Activated B cell treated with CpG ODN at 0.5 μM for 24 hours (primary cell): ENCODE measurements at regions of chr6 and their contacts with region 1.

Region 1: DNA sequence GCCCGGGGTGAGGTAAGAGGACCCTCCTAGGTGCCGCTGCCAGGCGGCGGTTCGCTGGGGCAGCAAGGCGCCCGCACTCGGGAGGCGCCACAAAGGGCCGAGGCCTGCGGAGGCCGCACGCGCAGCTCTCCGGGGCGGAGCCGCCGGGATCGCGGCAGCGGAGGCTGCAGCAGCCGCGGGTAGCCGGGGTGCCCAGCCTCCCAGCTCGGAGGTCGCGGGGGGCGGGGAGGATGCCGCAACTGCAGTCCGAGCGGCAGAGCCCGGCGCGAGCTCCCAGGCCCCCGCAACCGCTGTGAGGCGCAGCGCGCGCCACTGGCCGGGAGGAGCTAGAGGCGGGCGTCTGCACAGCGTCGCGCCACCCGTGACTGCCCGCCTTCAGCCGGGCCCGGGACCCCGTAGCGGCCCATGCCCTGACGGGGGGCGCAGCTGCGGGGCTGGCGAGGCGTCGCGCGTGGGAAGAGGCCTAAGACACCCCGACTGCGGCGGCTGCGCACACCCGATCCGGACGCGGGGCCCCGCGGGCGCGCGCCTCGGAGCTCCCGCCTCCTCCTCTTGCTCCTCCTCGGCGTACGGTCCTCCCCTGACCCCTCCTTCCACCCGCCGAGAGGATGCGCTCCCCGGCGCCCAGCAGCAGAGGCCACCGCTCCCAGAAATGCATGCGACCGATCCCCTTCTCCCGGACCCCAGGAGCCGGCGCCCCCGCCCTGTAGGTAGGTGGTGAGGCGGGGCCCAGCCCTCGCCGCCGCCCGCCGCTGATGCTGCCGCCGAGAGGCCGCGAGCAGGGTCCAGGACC is at the start of gene NCOA7:
- DNase-seq: peak; percentile 74
- ATAC-seq: peak; percentile 79
- H3K4me3 Mint-ChIP-seq: peak within 1 kb of the TSS; percentile 89
- H3K27ac Mint-ChIP-seq: peak within 1 kb of the TSS; percentile 95
- H3K4me1 Mint-ChIP-seq: peaks cover 50% of the 10 kb centered on the region
- H3K27me3 Mint-ChIP-seq: no peaks in the 10 kb centered on the region
- CTCF ChIP-seq: no peak
- total RNA-seq, gene NCOA7: 29.2 and 33.4 TPM in 2 replicates

Region 2: GRCh38 chr6:125301435-125302391 is 488.8 kb before region 1 on chr6 and contains the start of gene HDDC2:
- CTCF ChIA-PET with region 1: no interaction called
- POLR2A ChIA-PET with region 1: interaction called, 15 read pairs
- intact Hi-C with region 1: no loop called
- DNase-seq: peak; percentile 53
- ATAC-seq: peak; percentile 78
- H3K4me3 Mint-ChIP-seq: peak within 1 kb of the TSS; percentile 89
- H3K27ac Mint-ChIP-seq: peak within 1 kb of the TSS; percentile 78
- H3K4me1 Mint-ChIP-seq: peaks cover 38% of the 10 kb centered on the region
- H3K27me3 Mint-ChIP-seq: peaks cover 14% of the 10 kb centered on the region
- CTCF ChIP-seq: no peak
- total RNA-seq, gene HDDC2: 53.1 and 55.8 TPM in 2 replicates

Region 3: DNA sequence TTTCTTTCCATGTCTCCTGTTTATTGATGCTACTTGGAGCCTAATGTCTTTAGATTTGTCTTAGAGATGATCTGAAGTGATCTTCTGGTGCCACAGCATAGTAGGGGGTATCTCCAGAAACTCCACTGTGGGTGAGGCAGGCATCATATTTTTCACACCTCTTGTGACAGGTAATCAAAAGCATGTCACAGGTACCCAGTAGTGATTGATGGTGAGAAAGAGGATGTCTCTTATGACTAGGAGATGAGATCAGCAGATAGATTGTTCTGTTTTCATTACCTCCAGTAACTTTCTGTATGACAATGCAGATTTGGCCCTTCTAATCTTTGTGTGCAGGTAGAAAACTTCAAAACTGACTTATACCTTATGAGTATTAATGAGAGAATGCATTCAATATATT is 13.7 kb after region 1 on chr6:
- CTCF ChIA-PET with region 1: interaction called, 13 read pairs
- POLR2A ChIA-PET with region 1: interaction called, 33 read pairs
- intact Hi-C with region 1: no loop called
- DNase-seq: no peak
- ATAC-seq: no peak
- H3K4me3 Mint-ChIP-seq: no peak overlapping the region
- H3K27ac Mint-ChIP-seq: no peak overlapping the region
- H3K4me1 Mint-ChIP-seq: peaks cover 68% of the 10 kb centered on the region
- H3K27me3 Mint-ChIP-seq: no peaks in the 10 kb centered on the region
- CTCF ChIP-seq: no peak

Region 4: GRCh38 chr6:125858427-125859320 is 68.1 kb after region 1 on chr6:
- CTCF ChIA-PET with region 1: interaction called, 3 read pairs
- POLR2A ChIA-PET with region 1: interaction called, 5 read pairs
- intact Hi-C with region 1: loop called (anchors 2 kb)
- DNase-seq: no peak
- ATAC-seq: peak; percentile 45
- H3K4me3 Mint-ChIP-seq: no peak overlapping the region
- H3K27ac Mint-ChIP-seq: no peak overlapping the region
- H3K4me1 Mint-ChIP-seq: no peaks in the 10 kb centered on the region
- H3K27me3 Mint-ChIP-seq: no peaks in the 10 kb centered on the region
- CTCF ChIP-seq: no peak

Region 5: DNA sequence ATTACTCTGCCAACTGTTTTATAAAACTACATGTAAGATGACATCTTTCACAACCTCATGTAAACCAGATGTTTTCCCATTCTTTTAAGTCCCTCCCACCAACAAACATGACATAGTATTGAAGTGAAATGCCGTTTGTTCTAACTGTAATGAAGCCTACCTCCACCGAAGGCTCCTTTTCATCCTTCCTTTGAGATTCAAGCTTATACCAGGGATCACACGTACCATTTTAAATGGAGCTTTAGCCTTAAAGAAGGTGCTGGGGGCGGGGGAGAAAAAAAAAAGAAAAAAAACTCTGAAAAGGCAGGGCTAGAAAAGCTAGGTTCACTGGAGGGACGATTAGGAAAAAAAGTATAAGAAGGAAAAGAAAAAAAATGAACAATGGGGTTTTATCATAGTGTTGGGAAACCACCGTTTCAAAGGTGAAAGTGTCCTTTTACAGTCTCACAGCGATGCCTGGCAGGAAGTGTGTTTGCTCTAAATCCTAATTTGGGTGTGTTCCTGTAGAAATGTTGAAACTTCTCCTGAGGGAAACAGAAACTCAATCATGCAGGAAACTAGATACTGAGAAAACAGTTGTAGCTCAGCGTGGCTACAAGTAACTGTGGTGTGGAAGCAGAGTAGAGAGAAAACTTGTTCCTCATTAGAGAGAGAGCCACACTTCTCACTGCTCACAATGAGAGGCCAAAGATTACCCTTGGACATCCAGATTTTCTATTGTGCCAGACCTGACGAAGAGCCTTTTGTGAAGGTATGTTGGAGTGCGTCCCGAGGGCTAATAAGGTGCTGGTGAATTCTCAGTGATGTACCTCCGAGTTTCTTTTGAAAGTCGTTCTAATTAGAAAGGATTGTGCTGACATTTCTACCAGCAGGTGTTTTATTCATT is 128.4 kb after region 1 on chr6:
- CTCF ChIA-PET with region 1: interaction called, 3 read pairs
- POLR2A ChIA-PET with region 1: interaction called, 23 read pairs
- intact Hi-C with region 1: loop called (anchors 1 kb)
- DNase-seq: no peak
- ATAC-seq: peak; percentile 90
- H3K4me3 Mint-ChIP-seq: peak overlapping the region; percentile 80
- H3K27ac Mint-ChIP-seq: peak overlapping the region; percentile 90
- H3K4me1 Mint-ChIP-seq: peaks cover 28% of the 10 kb centered on the region
- H3K27me3 Mint-ChIP-seq: no peaks in the 10 kb centered on the region
- CTCF ChIP-seq: no peak

Region 6: DNA sequence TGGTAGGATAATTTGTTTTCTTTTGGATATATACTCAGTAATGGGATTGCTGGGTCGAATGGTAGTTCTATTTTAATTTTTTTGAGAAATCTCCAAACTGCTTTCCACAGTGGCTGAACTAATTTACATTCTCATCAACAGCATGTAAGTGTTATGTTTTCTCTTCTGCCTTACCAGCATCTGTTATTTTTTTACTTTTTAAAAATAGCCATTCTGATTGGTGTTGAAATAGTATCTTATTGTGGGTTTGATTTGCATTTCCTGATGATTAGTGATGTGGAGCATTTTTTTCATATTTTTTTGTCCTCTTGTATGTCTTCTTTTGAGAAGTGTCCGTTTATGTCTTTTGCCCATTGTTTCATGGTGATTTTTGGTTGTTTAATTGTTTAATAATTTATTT is 177.9 kb after region 1 on chr6:
- CTCF ChIA-PET with region 1: interaction called, 52 read pairs
- POLR2A ChIA-PET with region 1: no interaction called
- intact Hi-C with region 1: no loop called
- DNase-seq: no peak
- ATAC-seq: no peak
- H3K4me3 Mint-ChIP-seq: peak overlapping the region; percentile 28
- H3K27ac Mint-ChIP-seq: peak overlapping the region; percentile 3
- H3K4me1 Mint-ChIP-seq: peaks cover 38% of the 10 kb centered on the region
- H3K27me3 Mint-ChIP-seq: no peaks in the 10 kb centered on the region
- CTCF ChIP-seq: no peak

Region 7: GRCh38 chr6:125986300-125987025 is 195.9 kb after region 1 on chr6 and contains the start of gene TRMT11:
- CTCF ChIA-PET with region 1: no interaction called
- POLR2A ChIA-PET with region 1: interaction called, 23 read pairs
- intact Hi-C with region 1: no loop called
- DNase-seq: peak; percentile 70
- ATAC-seq: peak; percentile 95
- H3K4me3 Mint-ChIP-seq: peak within 1 kb of the TSS; percentile 25
- H3K27ac Mint-ChIP-seq: no peak within 1 kb of the TSS
- H3K4me1 Mint-ChIP-seq: peaks cover 9% of the 10 kb centered on the region
- H3K27me3 Mint-ChIP-seq: no peaks in the 10 kb centered on the region
- CTCF ChIP-seq: no peak
- total RNA-seq, gene TRMT11: 24.6 and 33.4 TPM in 2 replicates